ENCODE measurements at regions of chrX and their contacts with region 1.

Region 1: GRCh38 chrX:153627675-153628111 is 19.3 kb upstream of the DUSP9 start:
- DNase-seq: peak; percentile 80
- ATAC-seq: peak; percentile 68
- H3K4me3 ChIP-seq: peak overlapping the region in 1 of 3 experiments; percentile 37; a peak in 2 of 6 replicates
- H3K27ac ChIP-seq: peak overlapping the region; percentile 100
- H3K4me1 ChIP-seq: peaks cover 86% of the 10 kb centered on the region
- H3K27me3 ChIP-seq: no peaks in the 10 kb centered on the region
- CTCF ChIP-seq: peak; percentile 39
- EP300 ChIP-seq: peak in 1 of 2 experiments; percentile 66; a peak in 2 of 4 replicates
- POLR2A ChIP-seq: peak in 1 of 2 experiments; percentile 66; a peak in 1 of 4 replicates
- RAD21 ChIP-seq: no peak

Region 2: GRCh38 chrX:153507484-153508178 is 120.1 kb before region 1 on chrX:
- CTCF ChIA-PET with region 1: no interaction called
- POLR2A ChIA-PET with region 1: no interaction called
- in situ Hi-C with region 1: no loop called
- intact Hi-C with region 1: no loop called
- DNase-seq: peak; percentile 27
- ATAC-seq: peak; percentile 96
- H3K4me3 ChIP-seq: no peak overlapping the region
- H3K27ac ChIP-seq: no peak overlapping the region
- H3K4me1 ChIP-seq: no peaks in the 10 kb centered on the region
- H3K27me3 ChIP-seq: no peaks in the 10 kb centered on the region
- CTCF ChIP-seq: peak; percentile 94
- EP300 ChIP-seq: no peak
- POLR2A ChIP-seq: no peak
- RAD21 ChIP-seq: peak; percentile 87

Region 3: GRCh38 chrX:153599192-153600031 is 28.3 kb before region 1 on chrX:
- CTCF ChIA-PET with region 1: no interaction called
- POLR2A ChIA-PET with region 1: interaction called, 10 read pairs
- in situ Hi-C with region 1: no loop called
- intact Hi-C with region 1: no loop called
- DNase-seq: peak; percentile 70
- ATAC-seq: peak; percentile 89
- H3K4me3 ChIP-seq: peak overlapping the region; percentile 60 to 70 (median 63); a peak in 5 of 6 replicates
- H3K27ac ChIP-seq: no peak overlapping the region
- H3K4me1 ChIP-seq: peaks cover 30% of the 10 kb centered on the region
- H3K27me3 ChIP-seq: no peaks in the 10 kb centered on the region; a peak in 1 of 5 replicates
- CTCF ChIP-seq: no peak
- EP300 ChIP-seq: no peak
- POLR2A ChIP-seq: no peak; a peak in 1 of 4 replicates
- RAD21 ChIP-seq: no peak

Region 4: DNA sequence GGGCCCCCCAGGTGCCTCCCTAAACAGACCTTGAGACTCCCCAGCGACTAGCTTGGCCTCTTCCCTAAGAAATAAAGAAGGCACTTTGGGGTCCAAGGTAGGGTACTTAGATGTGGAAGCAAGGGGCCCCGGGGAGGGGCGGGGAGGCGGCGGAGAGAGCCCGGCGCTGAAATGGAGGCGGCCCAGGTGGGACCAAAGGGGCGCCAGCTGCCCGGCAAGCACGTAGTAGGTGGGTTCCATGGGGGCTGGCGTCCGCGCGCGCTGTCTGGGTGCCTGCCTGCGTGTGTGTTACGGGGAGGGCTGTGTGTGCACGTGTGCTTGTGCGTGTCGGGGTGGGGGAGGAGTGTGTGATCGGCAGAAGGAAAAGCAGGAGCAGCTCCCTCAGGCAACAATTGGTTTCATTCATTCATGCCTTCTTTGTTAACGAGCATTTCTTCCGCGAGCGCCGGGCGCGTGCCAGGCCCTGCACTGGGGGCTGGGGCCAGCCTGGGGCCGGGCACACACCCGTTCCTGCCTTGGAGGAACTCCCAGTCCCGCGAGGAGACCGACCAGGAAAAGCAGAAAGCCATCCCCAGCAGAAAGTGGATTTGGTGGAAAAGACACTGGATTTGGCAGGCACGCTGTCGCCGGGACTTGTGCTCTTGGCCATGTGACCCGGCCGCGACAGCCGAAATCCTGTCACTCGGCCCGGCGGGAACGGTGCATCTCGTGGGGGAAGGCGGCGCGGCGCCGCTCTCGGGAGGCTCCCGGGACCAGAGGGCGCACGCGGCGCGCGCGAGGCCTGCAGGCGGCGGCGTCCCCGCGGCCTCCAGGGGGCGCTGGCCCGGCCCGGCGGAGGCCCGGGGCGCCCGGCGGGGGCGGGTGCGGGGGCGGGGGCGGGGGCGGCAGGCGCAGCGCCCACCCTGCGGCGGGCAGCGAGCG is 16.0 kb after region 1 on chrX:
- CTCF ChIA-PET with region 1: no interaction called
- POLR2A ChIA-PET with region 1: interaction called, 596 read pairs
- in situ Hi-C with region 1: no loop called
- intact Hi-C with region 1: loop called (anchors 2 kb)
- DNase-seq: no peak
- ATAC-seq: no peak
- H3K4me3 ChIP-seq: peak overlapping the region; percentile 65 to 87 (median 75); a peak in 5 of 6 replicates
- H3K27ac ChIP-seq: peak overlapping the region; percentile 72
- H3K4me1 ChIP-seq: peaks cover 51% of the 10 kb centered on the region
- H3K27me3 ChIP-seq: no peaks in the 10 kb centered on the region; a peak in 1 of 5 replicates
- CTCF ChIP-seq: peak; percentile 28; the same call in 1 of the 2 replicates
- EP300 ChIP-seq: no peak
- POLR2A ChIP-seq: no peak
- RAD21 ChIP-seq: 0 out of 2 replicates have a peak, but pooled peaks have one; percentile 23

Region 5: DNA sequence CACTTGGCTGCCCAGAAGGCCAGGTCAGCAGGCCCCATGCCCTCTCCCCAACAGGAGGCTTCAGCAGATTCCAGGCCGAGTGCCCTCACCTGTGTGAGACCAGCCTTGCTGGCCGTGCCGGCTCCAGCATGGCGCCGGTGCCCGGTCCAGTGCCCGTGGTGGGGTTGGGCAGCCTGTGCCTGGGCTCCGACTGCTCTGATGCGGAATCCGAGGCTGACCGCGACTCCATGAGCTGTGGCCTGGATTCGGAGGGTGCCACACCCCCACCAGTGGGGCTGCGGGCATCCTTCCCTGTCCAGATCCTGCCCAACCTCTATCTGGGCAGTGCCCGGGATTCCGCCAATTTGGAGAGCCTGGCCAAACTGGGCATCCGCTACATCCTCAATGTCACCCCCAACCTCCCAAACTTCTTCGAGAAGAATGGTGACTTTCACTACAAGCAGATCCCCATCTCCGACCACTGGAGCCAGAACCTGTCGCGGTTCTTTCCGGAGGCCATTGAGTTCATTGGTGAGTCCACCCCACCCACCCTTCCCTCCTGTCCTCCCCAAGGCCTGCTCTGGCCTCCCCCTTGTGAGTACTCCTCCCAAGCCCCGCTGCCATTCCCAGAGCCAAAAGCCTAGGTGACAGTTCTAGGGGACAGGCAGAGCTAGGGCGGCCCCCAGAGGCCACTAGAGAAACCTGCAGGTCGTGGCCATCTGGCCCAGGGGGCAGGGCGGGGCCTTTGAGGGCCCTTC is 21.7 kb after region 1 on chrX:
- CTCF ChIA-PET with region 1: no interaction called
- POLR2A ChIA-PET with region 1: interaction called, 596 read pairs
- in situ Hi-C with region 1: no loop called
- intact Hi-C with region 1: loop called (anchors 2 kb)
- DNase-seq: peak; percentile 70
- ATAC-seq: peak; percentile 32
- H3K4me3 ChIP-seq: peak overlapping the region; percentile 69 to 79 (median 75); a peak in 5 of 6 replicates
- H3K27ac ChIP-seq: peak overlapping the region; percentile 79
- H3K4me1 ChIP-seq: peaks cover 50% of the 10 kb centered on the region
- H3K27me3 ChIP-seq: no peaks in the 10 kb centered on the region; a peak in 1 of 5 replicates
- CTCF ChIP-seq: peak; percentile 67
- EP300 ChIP-seq: no peak
- POLR2A ChIP-seq: no peak
- RAD21 ChIP-seq: peak; percentile 72

Measured in HepG2 (cell line).